ENCODE measurements at regions of chr21 and their contacts with region 1.

Region 1: GRCh38 chr21:40049394-40050290 is 182.4 kb downstream of the PCP4 start:
- DNase-seq: no peak
- H3K4me3 ChIP-seq: no peak overlapping the region
- H3K27ac ChIP-seq: peak overlapping the region; percentile 84 to 91 (median 88)
- H3K4me1 ChIP-seq: peaks cover 19 to 74% (median 68%) of the 10 kb centered on the region in 4 donors
- H3K27me3 ChIP-seq: no peaks in the 10 kb centered on the region
- CTCF ChIP-seq: peak in 1 of 3 experiments; percentile 15
- EP300 ChIP-seq: no peak
- POLR2A ChIP-seq: no peak

Region 2: DNA sequence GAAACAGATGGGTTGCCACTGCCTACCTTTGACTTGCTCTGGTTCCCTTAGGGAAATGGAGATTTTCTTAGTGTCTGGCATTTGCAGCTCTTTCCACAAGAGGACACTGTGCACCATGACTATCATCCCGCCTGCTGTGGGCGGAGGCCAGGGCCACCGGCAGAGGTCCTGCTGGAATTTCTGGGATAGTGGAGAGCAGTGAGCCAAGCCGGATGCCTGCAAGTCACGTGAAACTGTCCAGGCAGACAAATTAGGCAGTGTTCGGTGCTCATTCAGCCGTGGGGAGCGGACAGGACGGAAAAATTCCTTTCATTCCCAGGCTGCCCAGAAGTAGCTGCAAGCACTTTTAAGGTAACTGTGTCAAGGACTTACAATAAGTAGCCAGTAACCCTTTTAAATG is 261.3 kb before region 1 on chr21:
- intact Hi-C with region 1: loop called (anchors 5 kb)
- DNase-seq: peak; percentile 94
- H3K4me3 ChIP-seq: no peak overlapping the region
- H3K27ac ChIP-seq: peak overlapping the region; percentile 49 to 72 (median 58)
- H3K4me1 ChIP-seq: peaks cover 0 to 21% (median 13%) of the 10 kb centered on the region in 4 donors
- H3K27me3 ChIP-seq: no peaks in the 10 kb centered on the region
- CTCF ChIP-seq: peak; percentile 87 to 92 (median 90)
- EP300 ChIP-seq: peak; percentile 18
- POLR2A ChIP-seq: no peak

Region 3: GRCh38 chr21:39867198-39867650 is 182.4 kb before region 1 on chr21 and contains the start of gene PCP4:
- intact Hi-C with region 1: loop called (anchors 5 kb)
- DNase-seq: no peak
- H3K4me3 ChIP-seq: peak within 1 kb of the TSS; percentile 45 to 66 (median 50)
- H3K27ac ChIP-seq: peak within 1 kb of the TSS; percentile 59 to 81 (median 68)
- H3K4me1 ChIP-seq: peaks cover 0 to 22% (median 19%) of the 10 kb centered on the region in 4 donors
- H3K27me3 ChIP-seq: no peaks in the 10 kb centered on the region
- CTCF ChIP-seq: peak; percentile 81 to 90 (median 89)
- EP300 ChIP-seq: no peak
- POLR2A ChIP-seq: peak; percentile 20
- total RNA-seq, gene PCP4: 82.0 to 172 (median 125) TPM

Region 4: GRCh38 chr21:39951183-39952091 is 98.2 kb before region 1 on chr21:
- intact Hi-C with region 1: loop called (anchors 10 kb)
- DNase-seq: no peak
- H3K4me3 ChIP-seq: no peak overlapping the region
- H3K27ac ChIP-seq: peak overlapping the region in 2 of 4 donors; percentile 1 to 44
- H3K4me1 ChIP-seq: peaks cover 0 to 39% (median 18%) of the 10 kb centered on the region in 4 donors
- H3K27me3 ChIP-seq: no peaks in the 10 kb centered on the region
- CTCF ChIP-seq: no peak
- EP300 ChIP-seq: no peak
- POLR2A ChIP-seq: no peak

Region 5: DNA sequence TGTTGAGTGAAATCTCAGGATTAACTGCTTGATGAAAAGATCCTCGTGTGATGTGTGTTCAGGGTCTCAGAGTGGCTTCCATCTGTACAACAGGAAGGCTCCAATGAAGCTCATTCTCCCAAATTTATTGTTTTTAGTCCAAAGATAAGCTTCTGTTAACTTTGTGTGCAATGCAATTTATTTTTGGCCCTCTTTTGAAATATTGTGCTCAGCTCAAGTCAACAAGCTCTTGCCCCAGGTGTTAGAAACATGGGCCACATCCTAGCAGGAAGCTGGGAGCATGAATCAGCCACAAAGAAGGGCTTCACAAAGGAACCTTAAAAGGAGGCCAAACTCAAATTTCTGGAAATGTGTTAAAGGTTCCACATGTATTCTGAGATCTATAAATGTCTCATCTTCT is 46.7 kb before region 1 on chr21:
- intact Hi-C with region 1: no loop called
- DNase-seq: no peak
- H3K4me3 ChIP-seq: no peak overlapping the region
- H3K27ac ChIP-seq: peak overlapping the region in 2 of 4 donors; percentile 9 to 35
- H3K4me1 ChIP-seq: peaks cover 0 to 10% (median 7%) of the 10 kb centered on the region in 4 donors
- H3K27me3 ChIP-seq: no peaks in the 10 kb centered on the region
- CTCF ChIP-seq: no peak
- EP300 ChIP-seq: no peak
- POLR2A ChIP-seq: no peak

Measured in esophagus muscularis mucosa (tissue), 4 donors.